IMR-90 (cell line): ENCODE measurements at regions of chr5 and their contacts with region 1.

Region 1: GRCh38 chr5:164672931-164673694 is 1167.7 kb downstream of the MAT2B start:
- DNase-seq: peak; percentile 17
- ATAC-seq: peak; percentile 69
- H3K4me3 ChIP-seq: no peak overlapping the region
- H3K27ac ChIP-seq: no peak overlapping the region
- H3K4me1 ChIP-seq: 0 out of 2 replicates have a peak, but pooled peaks cover 2% of the 10 kb centered on the region
- H3K27me3 ChIP-seq: no peaks in the 10 kb centered on the region
- CTCF ChIP-seq: peak; percentile 28
- POLR2A ChIP-seq: no peak
- RAD21 ChIP-seq: peak; percentile 16; the same call in 1 of the 2 replicates

Region 2: GRCh38 chr5:163564321-163564938 is 1108.7 kb before region 1 on chr5:
- CTCF ChIA-PET with region 1: no interaction called
- POLR2A ChIA-PET with region 1: no interaction called
- dilution Hi-C with region 1: no loop called
- in situ Hi-C with region 1: loop called (anchors 25 kb)
- intact Hi-C with region 1: loop called (anchors 2 kb)
- DNase-seq: peak; percentile 69
- ATAC-seq: peak; percentile 68
- H3K4me3 ChIP-seq: no peak overlapping the region
- H3K27ac ChIP-seq: no peak overlapping the region
- H3K4me1 ChIP-seq: peaks cover 5% of the 10 kb centered on the region
- H3K27me3 ChIP-seq: no peaks in the 10 kb centered on the region
- CTCF ChIP-seq: peak; percentile 89
- POLR2A ChIP-seq: no peak
- RAD21 ChIP-seq: peak; percentile 91

Region 3: GRCh38 chr5:165209086-165209727 is 536.1 kb after region 1 on chr5:
- CTCF ChIA-PET with region 1: no interaction called
- POLR2A ChIA-PET with region 1: no interaction called
- dilution Hi-C with region 1: no loop called
- in situ Hi-C with region 1: no loop called
- intact Hi-C with region 1: loop called (anchors 2 kb)
- DNase-seq: peak; percentile 37
- ATAC-seq: no peak
- H3K4me3 ChIP-seq: no peak overlapping the region
- H3K27ac ChIP-seq: no peak overlapping the region
- H3K4me1 ChIP-seq: no peaks in the 10 kb centered on the region
- H3K27me3 ChIP-seq: no peaks in the 10 kb centered on the region
- CTCF ChIP-seq: peak; percentile 61
- POLR2A ChIP-seq: no peak
- RAD21 ChIP-seq: peak; percentile 37